Dendritic cell treated with granulocyte-macrophage colony-stimulating factor and Interleukin-4, amounts not matched to agents 40 ng/mL and 50 ng/mL, for 4 days (primary cell): ENCODE measurements at regions of chr12 and their contacts with region 1.

Region 1: GRCh38 chr12:76031537-76032073 is at the start of gene PHLDA1:
- H3K4me3 Mint-ChIP-seq: peak within 1 kb of the TSS; percentile 99
- H3K27ac Mint-ChIP-seq: peak within 1 kb of the TSS; percentile 95
- H3K4me1 Mint-ChIP-seq: peaks cover 32% of the 10 kb centered on the region
- H3K27me3 Mint-ChIP-seq: peaks cover 20% of the 10 kb centered on the region

Region 2: GRCh38 chr12:75334384-75335030 is 697.1 kb before region 1 on chr12 and contains the start of gene GLIPR1L1:
- intact Hi-C with region 1: loop called (anchors 10 kb)
- H3K4me3 Mint-ChIP-seq: peak within 1 kb of the TSS; percentile 58
- H3K27ac Mint-ChIP-seq: no peak within 1 kb of the TSS
- H3K4me1 Mint-ChIP-seq: peaks cover 13% of the 10 kb centered on the region
- H3K27me3 Mint-ChIP-seq: peaks cover 5% of the 10 kb centered on the region

Region 3: GRCh38 chr12:75939016-75939642 is 92.5 kb before region 1 on chr12:
- intact Hi-C with region 1: loop called (anchors 5 kb)
- H3K4me3 Mint-ChIP-seq: no peak overlapping the region
- H3K27ac Mint-ChIP-seq: no peak overlapping the region
- H3K4me1 Mint-ChIP-seq: peaks cover 6% of the 10 kb centered on the region
- H3K27me3 Mint-ChIP-seq: peaks cover 15% of the 10 kb centered on the region

Region 4: DNA sequence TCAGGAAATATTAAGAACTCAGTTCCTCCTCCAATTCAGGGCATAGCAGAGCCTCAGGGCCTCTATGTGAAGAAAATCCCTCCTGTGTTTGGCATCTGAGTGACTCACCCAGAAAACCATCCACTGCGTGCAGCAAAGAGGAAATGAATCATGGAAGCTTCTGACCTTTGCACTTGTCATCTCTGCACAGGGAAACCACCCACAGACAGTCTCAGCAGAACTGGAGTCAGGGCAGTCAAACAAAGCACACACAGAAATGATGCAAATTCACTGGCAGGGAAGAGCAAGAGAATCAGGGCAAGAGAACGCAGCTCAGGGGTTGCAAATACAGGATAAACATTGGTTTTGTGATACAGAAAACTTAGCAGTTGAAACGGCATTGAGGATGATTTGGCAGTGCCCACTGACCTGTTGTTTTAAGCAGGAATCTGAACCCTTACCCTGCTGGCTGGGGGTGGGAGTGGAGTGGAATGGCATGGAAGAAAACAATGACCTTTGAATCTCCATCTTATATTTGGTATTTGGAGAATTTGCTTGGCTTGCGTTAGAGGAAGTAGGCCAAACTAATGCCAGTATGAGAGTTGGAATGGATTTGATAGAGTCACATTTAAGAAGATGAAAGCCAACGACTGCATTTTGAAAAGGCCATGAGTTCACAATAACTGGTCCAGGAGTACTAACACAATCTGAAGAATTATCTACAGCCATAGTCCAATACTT is 53.5 kb before region 1 on chr12:
- intact Hi-C with region 1: loop called (anchors 5 kb)
- H3K4me3 Mint-ChIP-seq: peak overlapping the region; percentile 15
- H3K27ac Mint-ChIP-seq: peak overlapping the region; percentile 75
- H3K4me1 Mint-ChIP-seq: peaks cover 71% of the 10 kb centered on the region
- H3K27me3 Mint-ChIP-seq: no peaks in the 10 kb centered on the region